Activated T-helper 1 cell treated with anti-CD3 and anti-CD28 coated beads, Interleukin-12 subunit alpha, Interleukin-12 subunit beta, Interleukin-2, Interleukin-4 antibody, amounts not matched to agents 30 ng/mL and 10 ng/mL and 1 ng/mL, durations not matched to agents 14 hours and 24 hours and 36 hours (primary cell): ENCODE measurements at regions of chrX and their contacts with region 1.

Region 1: GRCh38 chrX:70030301-70030767 is 19.4 kb downstream of the AWAT2 start:
- DNase-seq: peak; percentile 15
- H3K4me3 Mint-ChIP-seq: no peak overlapping the region
- H3K27ac Mint-ChIP-seq: no peak overlapping the region
- H3K4me1 Mint-ChIP-seq: peaks cover 40% of the 10 kb centered on the region
- H3K27me3 Mint-ChIP-seq: peaks cover 3% of the 10 kb centered on the region

Region 2: DNA sequence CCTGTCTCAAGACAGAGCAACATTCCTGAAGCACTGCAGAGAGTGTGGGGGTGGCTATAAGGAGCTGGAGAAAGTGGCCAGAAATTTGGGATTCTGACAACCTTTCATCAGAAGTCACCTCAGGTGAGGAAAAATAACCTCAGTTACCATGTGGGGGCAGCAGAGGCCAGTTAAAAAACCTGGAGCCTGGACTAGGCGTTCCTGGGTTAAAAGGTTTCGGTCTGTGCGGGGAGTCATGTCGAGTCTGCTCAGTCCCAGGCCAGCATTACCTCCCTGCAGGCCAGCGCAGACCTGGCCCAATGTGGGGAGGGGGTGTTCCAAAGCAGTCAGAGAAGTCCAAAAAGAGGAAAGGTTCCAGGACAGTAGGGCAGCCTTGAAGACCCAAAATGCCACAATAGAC is 537.1 kb before region 1 on chrX:
- intact Hi-C with region 1: loop called (anchors 1 kb)
- DNase-seq: no peak
- H3K4me3 Mint-ChIP-seq: no peak overlapping the region
- H3K27ac Mint-ChIP-seq: no peak overlapping the region
- H3K4me1 Mint-ChIP-seq: no peaks in the 10 kb centered on the region
- H3K27me3 Mint-ChIP-seq: no peaks in the 10 kb centered on the region

Region 3: DNA sequence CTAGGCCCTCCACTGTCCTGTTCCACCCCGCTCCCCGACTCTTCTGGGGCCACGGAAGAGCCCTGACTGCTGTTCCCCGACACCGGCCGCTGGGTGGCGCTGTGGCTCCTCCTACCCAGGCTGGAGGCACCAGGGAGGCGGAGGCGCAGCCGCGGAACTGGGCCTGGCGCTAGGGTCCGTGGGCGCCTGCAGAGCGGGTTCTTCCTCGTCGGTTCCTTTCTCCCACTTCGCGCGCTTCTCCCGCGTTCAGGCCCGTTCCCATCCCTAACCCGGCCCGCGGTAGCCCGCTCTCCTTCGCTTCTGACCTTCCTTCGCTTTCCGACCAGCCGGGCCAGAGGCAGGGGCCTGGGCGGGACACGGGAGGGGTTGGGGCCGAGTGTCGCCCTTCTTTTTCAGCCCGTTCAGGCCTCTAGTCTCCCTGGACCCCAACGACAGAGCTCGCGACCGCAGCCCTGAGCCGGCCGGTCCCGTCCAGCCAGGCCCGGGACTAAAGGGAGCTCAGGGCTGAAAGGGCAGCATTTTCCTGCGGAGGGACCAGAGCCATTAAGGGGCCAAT is 491.9 kb before region 1 on chrX:
- intact Hi-C with region 1: loop called (anchors 1 kb)
- DNase-seq: peak; percentile 62
- H3K4me3 Mint-ChIP-seq: peak overlapping the region; percentile 22
- H3K27ac Mint-ChIP-seq: no peak overlapping the region
- H3K4me1 Mint-ChIP-seq: peaks cover 17% of the 10 kb centered on the region
- H3K27me3 Mint-ChIP-seq: peaks cover 2% of the 10 kb centered on the region

Region 4: GRCh38 chrX:69615779-69616456 is 414.4 kb before region 1 on chrX and contains the start of gene EDA:
- intact Hi-C with region 1: loop called (anchors 5 kb)
- DNase-seq: peak; percentile 68
- H3K4me3 Mint-ChIP-seq: peak within 1 kb of the TSS; percentile 77
- H3K27ac Mint-ChIP-seq: no peak within 1 kb of the TSS
- H3K4me1 Mint-ChIP-seq: peaks cover 17% of the 10 kb centered on the region
- H3K27me3 Mint-ChIP-seq: peaks cover 14% of the 10 kb centered on the region
- total RNA-seq, gene EDA: 1.6 and 2.4 TPM in 2 replicates

Region 5: DNA sequence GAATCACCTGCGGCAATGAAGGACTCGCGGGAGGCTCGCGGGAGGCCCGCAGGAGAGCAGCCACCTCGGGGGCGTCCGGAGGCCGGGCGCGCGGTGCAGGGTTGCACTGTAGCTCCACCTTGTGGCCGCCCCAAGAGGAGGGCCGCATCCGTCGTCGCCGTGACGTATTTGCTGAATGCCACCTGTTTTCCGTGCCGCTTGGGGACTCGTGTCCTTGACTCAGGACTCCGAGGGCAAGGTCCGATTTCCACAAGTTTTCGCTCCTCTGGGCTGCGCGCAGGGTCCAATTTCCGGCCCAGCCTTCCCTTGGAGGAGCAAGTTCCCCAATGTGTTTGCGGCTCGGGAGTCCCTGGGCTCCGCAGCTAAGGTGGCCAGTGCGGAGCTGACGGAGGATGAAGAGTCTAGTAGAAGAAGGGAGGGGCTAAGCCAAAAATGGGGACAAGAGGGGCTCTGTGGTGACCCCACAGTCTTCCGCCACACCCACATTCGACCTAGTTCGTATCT is 403.6 kb after region 1 on chrX:
- intact Hi-C with region 1: no loop called
- DNase-seq: peak; percentile 64
- H3K4me3 Mint-ChIP-seq: peak overlapping the region; percentile 91
- H3K27ac Mint-ChIP-seq: peak overlapping the region; percentile 93
- H3K4me1 Mint-ChIP-seq: peaks cover 22% of the 10 kb centered on the region
- H3K27me3 Mint-ChIP-seq: peaks cover 11% of the 10 kb centered on the region